MCF 10A (cell line): ENCODE measurements at regions of chr20 and their contacts with region 1.

Region 1: GRCh38 chr20:36085686-36086267 is 68.8 kb upstream of the EPB41L1 start:
- DNase-seq: peak; percentile 92
- H3K4me3 Mint-ChIP-seq: peak overlapping the region; percentile 45
- H3K27ac Mint-ChIP-seq: peak overlapping the region; percentile 85
- H3K4me1 Mint-ChIP-seq: peaks cover 23% of the 10 kb centered on the region
- H3K27me3 Mint-ChIP-seq: no peaks in the 10 kb centered on the region
- CTCF ChIP-seq: no peak

Region 2: DNA sequence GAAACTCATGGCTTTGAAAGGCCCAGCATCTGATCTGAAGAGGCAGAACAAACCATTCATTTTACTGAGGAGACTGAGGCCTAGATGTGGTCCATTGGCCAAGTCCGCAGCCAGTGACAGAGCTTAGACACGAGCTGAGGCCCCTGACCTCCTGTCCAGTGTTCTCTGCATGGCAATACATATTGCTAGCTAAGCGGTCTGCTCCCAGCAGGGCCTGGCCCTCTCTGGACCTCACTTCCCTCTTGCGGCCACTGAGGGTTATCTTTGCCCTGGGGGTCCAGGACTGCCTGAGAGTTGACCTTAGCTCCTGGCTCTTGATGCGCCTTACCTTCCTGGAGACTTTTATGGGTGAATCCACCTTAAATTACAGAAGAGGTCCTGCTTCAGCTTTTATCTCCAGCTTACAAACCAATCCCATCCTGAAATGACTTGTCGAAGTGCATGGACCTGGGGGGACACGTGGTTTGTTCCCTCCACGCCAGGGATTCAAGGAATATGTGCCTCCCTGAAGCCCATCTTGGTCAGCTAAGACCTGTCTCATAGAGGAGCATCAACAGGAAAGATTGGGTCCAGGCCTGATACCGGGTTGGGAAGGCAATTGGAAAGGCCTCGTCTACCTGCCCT is 41.8 kb before region 1 on chr20:
- CTCF ChIA-PET with region 1: interaction called, 3 read pairs
- POLR2A ChIA-PET with region 1: interaction called, 77 read pairs
- intact Hi-C with region 1: no loop called
- DNase-seq: no peak
- H3K4me3 Mint-ChIP-seq: no peak overlapping the region
- H3K27ac Mint-ChIP-seq: no peak overlapping the region
- H3K4me1 Mint-ChIP-seq: peaks cover 14% of the 10 kb centered on the region
- H3K27me3 Mint-ChIP-seq: no peaks in the 10 kb centered on the region
- CTCF ChIP-seq: no peak

Region 3: DNA sequence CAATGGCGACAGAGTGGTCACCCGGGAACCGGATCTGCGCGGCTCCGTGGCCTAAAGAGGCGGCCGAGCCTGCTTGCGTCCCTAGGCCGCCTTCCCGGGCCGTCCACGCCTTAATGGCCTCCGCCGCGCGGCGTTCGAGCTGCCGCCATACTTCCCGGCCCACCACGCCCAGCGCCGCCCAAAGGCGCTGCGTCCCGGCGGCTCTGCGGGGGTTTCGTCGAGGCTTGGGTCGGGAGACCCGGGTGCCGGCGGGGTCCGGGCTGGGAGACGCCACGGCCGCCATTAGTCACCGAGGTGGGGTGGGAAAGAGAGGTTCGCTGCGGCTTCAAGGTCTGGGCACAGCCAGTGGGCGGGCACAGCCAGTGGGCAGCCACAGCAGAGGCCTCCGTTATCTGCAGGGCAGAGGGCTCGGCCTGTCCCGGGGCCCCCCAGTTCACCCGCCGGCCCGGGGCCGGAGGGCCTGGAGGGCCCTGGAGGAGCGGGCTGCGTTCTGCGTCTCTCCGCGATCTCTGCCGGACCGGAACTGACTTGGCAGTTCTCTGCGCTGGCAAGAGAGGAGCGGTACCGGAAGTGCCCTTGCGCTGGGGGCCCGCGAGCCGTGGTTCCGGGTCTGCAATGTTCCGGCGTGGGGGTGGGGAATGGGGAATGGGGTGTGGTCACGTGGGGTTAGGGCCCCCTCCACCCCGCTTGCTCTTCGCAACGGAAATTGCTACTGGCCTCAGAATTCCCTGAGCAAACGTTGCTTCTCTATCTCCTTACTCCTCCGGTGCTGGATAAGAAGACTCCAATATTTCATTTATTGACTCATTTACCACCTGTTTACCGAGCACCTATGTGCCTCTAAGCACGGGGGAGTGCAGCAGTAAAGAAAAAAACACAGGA is 35.1 kb before region 1 on chr20:
- CTCF ChIA-PET with region 1: no interaction called
- POLR2A ChIA-PET with region 1: interaction called, 77 read pairs
- intact Hi-C with region 1: loop called (anchors 5 kb)
- DNase-seq: peak; percentile 82
- H3K4me3 Mint-ChIP-seq: peak overlapping the region; percentile 84
- H3K27ac Mint-ChIP-seq: peak overlapping the region; percentile 93
- H3K4me1 Mint-ChIP-seq: peaks cover 24% of the 10 kb centered on the region
- H3K27me3 Mint-ChIP-seq: no peaks in the 10 kb centered on the region
- CTCF ChIP-seq: no peak

Region 4: GRCh38 chr20:36064658-36065426 is 20.9 kb before region 1 on chr20:
- CTCF ChIA-PET with region 1: interaction called, 6 read pairs
- POLR2A ChIA-PET with region 1: interaction called, 50 read pairs
- intact Hi-C with region 1: no loop called
- DNase-seq: peak; percentile 80
- H3K4me3 Mint-ChIP-seq: peak overlapping the region; percentile 72
- H3K27ac Mint-ChIP-seq: peak overlapping the region; percentile 27
- H3K4me1 Mint-ChIP-seq: peaks cover 6% of the 10 kb centered on the region
- H3K27me3 Mint-ChIP-seq: no peaks in the 10 kb centered on the region
- CTCF ChIP-seq: no peak

Region 5: DNA sequence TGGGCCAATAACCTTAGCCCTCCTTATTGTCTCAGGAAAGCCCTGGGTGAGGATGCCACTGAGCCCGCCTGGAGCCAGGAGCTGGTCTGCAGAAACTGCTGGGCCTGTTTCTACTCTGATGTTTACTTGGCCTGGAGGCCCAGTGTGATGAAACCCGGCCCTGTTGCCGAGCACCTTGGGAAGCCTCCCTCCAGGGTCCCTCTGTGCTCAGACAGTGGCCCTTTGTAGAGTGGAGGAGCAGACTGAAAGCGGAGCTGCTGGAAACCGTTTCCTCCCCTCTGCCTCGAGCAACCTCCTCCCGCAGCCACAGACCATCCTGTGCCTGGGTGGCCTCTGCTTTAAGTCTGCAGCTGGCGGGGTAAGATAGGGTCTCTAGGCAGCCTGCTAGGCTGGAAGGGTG is 15.3 kb before region 1 on chr20:
- CTCF ChIA-PET with region 1: interaction called, 8 read pairs
- POLR2A ChIA-PET with region 1: interaction called, 50 read pairs
- intact Hi-C with region 1: no loop called
- DNase-seq: no peak
- H3K4me3 Mint-ChIP-seq: no peak overlapping the region
- H3K27ac Mint-ChIP-seq: no peak overlapping the region
- H3K4me1 Mint-ChIP-seq: no peaks in the 10 kb centered on the region
- H3K27me3 Mint-ChIP-seq: no peaks in the 10 kb centered on the region
- CTCF ChIP-seq: no peak

Region 6: DNA sequence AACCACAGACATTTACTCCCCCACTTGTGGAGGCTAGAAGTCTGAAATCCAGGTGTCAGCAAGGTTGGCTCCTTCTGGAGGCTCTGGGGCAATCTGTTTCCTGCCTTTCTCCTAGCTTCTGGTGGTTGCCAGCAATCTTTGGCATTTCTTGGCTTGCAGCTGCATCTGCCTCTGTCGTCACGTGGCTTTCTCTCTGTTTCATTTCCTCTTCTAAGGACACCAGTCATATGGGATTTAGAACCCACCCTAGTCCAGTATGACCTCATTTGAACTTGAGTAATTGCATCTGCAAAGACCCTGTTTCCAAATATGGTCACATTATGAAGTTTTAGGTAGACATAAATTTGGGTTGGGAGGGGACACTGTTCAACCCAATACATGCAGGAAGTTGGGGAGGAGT is 12.6 kb after region 1 on chr20:
- CTCF ChIA-PET with region 1: interaction called, 8 read pairs
- POLR2A ChIA-PET with region 1: interaction called, 80 read pairs
- intact Hi-C with region 1: no loop called
- DNase-seq: peak; percentile 82
- H3K4me3 Mint-ChIP-seq: no peak overlapping the region
- H3K27ac Mint-ChIP-seq: peak overlapping the region; percentile 63
- H3K4me1 Mint-ChIP-seq: peaks cover 40% of the 10 kb centered on the region
- H3K27me3 Mint-ChIP-seq: no peaks in the 10 kb centered on the region
- CTCF ChIP-seq: no peak